Panc1 (cell line): ENCODE measurements at regions of chr11 and their contacts with region 1.

Region 1: GRCh38 chr11:130725421-130726233 is 190.7 kb downstream of the SNX19 start:
- DNase-seq: no peak
- ATAC-seq: peak; percentile 51
- H3K4me3 ChIP-seq: no peak overlapping the region
- H3K27ac ChIP-seq: peak overlapping the region; percentile 54; the same call in 1 of the 2 replicates
- H3K4me1 ChIP-seq: peaks cover 31% of the 10 kb centered on the region
- H3K27me3 ChIP-seq: no peaks in the 10 kb centered on the region
- CTCF ChIP-seq: no peak

Region 2: GRCh38 chr11:130478881-130479280 is 246.7 kb before region 1 on chr11:
- CTCF ChIA-PET with region 1: no interaction called
- POLR2A ChIA-PET with region 1: no interaction called
- in situ Hi-C with region 1: no loop called
- intact Hi-C with region 1: no loop called
- DNase-seq: no peak
- ATAC-seq: peak; percentile 27; the same call in 1 of the 2 replicates
- H3K4me3 ChIP-seq: no peak overlapping the region
- H3K27ac ChIP-seq: peak overlapping the region; percentile 76
- H3K4me1 ChIP-seq: peaks cover 20% of the 10 kb centered on the region
- H3K27me3 ChIP-seq: no peaks in the 10 kb centered on the region
- CTCF ChIP-seq: no peak

Region 3: GRCh38 chr11:130842001-130842400 is 116.4 kb after region 1 on chr11:
- CTCF ChIA-PET with region 1: interaction called, 14 read pairs
- POLR2A ChIA-PET with region 1: no interaction called
- in situ Hi-C with region 1: no loop called
- intact Hi-C with region 1: no loop called
- DNase-seq: no peak
- ATAC-seq: no peak
- H3K4me3 ChIP-seq: no peak overlapping the region
- H3K27ac ChIP-seq: no peak overlapping the region
- H3K4me1 ChIP-seq: no peaks in the 10 kb centered on the region
- H3K27me3 ChIP-seq: no peaks in the 10 kb centered on the region
- CTCF ChIP-seq: no peak

Region 4: DNA sequence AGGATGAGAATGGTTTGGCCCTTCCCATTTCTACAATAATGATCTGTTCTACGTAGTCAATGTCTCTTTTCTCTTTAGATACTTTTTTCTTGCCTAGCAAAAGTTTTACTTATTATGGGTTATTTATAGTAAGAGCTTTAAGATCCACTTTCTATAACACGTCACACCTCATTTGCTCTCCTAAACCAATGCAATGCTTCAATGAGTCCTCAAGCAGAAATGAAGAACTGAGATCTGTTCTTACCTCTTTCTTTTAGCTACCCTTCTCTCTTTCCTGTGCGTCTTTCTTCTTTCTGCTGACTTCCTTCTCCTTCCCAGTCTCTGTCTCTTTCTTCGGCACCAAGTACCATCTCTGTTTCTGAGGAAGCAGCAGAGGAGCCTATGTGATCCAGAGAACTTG is 128.9 kb after region 1 on chr11:
- CTCF ChIA-PET with region 1: no interaction called
- POLR2A ChIA-PET with region 1: interaction called, 20 read pairs
- in situ Hi-C with region 1: no loop called
- intact Hi-C with region 1: no loop called
- DNase-seq: no peak
- ATAC-seq: no peak
- H3K4me3 ChIP-seq: no peak overlapping the region
- H3K27ac ChIP-seq: no peak overlapping the region
- H3K4me1 ChIP-seq: no peaks in the 10 kb centered on the region
- H3K27me3 ChIP-seq: no peaks in the 10 kb centered on the region
- CTCF ChIP-seq: no peak